HepG2 (cell line): ENCODE measurements at regions of chr5 and their contacts with region 1.

Region 1: GRCh38 chr5:38193015-38193581 is 65.3 kb upstream of the EGFLAM start:
- DNase-seq: peak; percentile 64
- ATAC-seq: peak; percentile 71
- H3K4me3 ChIP-seq: no peak overlapping the region
- H3K27ac ChIP-seq: no peak overlapping the region
- H3K4me1 ChIP-seq: peaks cover 54% of the 10 kb centered on the region
- H3K27me3 ChIP-seq: 0 out of 5 replicates have a peak, but pooled peaks cover 0 to 12% of the 10 kb centered on the region in 2 experiments
- CTCF ChIP-seq: peak; percentile 96
- EP300 ChIP-seq: no peak
- POLR2A ChIP-seq: no peak
- RAD21 ChIP-seq: peak; percentile 96

Region 2: DNA sequence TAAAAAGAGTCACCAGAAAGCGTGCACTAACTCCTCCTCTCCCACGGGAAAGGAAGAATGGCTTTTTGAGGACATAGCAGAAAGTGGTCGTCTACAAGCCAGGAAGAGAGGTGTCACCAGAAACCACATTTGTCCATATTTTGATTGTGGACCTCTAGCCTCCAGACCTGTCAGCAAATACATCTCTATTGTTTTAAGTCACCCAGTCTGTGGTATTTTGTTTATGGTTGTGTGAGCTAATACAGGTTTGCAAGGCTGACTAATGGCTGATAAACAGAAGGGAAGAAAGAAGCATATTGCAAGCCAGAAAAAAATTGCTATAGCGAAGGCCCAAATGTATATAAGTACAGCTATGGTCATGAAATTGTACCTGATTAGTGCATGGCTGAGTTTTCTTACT is 792.6 kb before region 1 on chr5:
- CTCF ChIA-PET with region 1: no interaction called
- POLR2A ChIA-PET with region 1: no interaction called
- in situ Hi-C with region 1: loop called (anchors 10 kb)
- intact Hi-C with region 1: no loop called
- DNase-seq: no peak
- ATAC-seq: no peak
- H3K4me3 ChIP-seq: no peak overlapping the region
- H3K27ac ChIP-seq: no peak overlapping the region
- H3K4me1 ChIP-seq: no peaks in the 10 kb centered on the region
- H3K27me3 ChIP-seq: no peaks in the 10 kb centered on the region
- CTCF ChIP-seq: no peak
- EP300 ChIP-seq: no peak
- POLR2A ChIP-seq: no peak
- RAD21 ChIP-seq: no peak

Region 3: DNA sequence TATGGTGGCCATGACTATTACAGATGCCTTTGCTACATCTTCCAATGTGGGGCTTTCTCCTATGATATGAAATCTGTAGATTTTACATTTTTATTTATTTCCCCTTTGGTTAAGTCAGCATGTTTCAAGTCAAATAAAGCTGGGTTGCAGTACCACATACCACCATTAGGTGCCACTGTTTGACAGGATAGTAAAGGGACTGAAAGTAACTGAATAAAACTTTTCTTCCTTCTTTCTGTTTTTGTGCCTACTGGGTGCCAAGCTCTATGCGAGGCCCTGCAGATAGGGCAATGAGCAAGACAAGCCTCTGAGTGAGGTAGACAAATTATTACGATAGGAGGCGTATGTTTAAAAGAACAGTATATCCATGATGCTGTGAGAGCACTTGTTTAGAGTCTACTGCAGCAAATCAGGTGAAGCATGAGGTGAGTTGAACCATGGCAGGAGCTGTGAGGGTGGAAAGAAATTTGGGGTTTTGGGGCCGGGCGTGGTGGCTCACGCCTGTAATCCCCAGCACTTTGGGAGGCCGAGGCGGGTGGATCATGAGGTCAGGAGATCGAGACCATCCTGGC is 418.1 kb before region 1 on chr5:
- CTCF ChIA-PET with region 1: no interaction called
- POLR2A ChIA-PET with region 1: no interaction called
- in situ Hi-C with region 1: no loop called
- intact Hi-C with region 1: loop called (anchors 5 kb)
- DNase-seq: peak; percentile 13
- ATAC-seq: no peak
- H3K4me3 ChIP-seq: no peak overlapping the region
- H3K27ac ChIP-seq: no peak overlapping the region
- H3K4me1 ChIP-seq: peaks cover 9% of the 10 kb centered on the region; the same call in 1 of the 2 replicates
- H3K27me3 ChIP-seq: no peaks in the 10 kb centered on the region
- CTCF ChIP-seq: peak; percentile 57
- EP300 ChIP-seq: no peak
- POLR2A ChIP-seq: no peak
- RAD21 ChIP-seq: no peak

Region 4: GRCh38 chr5:38023799-38024198 is 169.3 kb before region 1 on chr5:
- CTCF ChIA-PET with region 1: interaction called, 11 read pairs
- POLR2A ChIA-PET with region 1: no interaction called
- in situ Hi-C with region 1: loop called (anchors 5 kb)
- intact Hi-C with region 1: loop called (anchors 1 kb)
- DNase-seq: peak; percentile 12
- ATAC-seq: no peak
- H3K4me3 ChIP-seq: no peak overlapping the region
- H3K27ac ChIP-seq: no peak overlapping the region
- H3K4me1 ChIP-seq: peaks cover 35% of the 10 kb centered on the region
- H3K27me3 ChIP-seq: peaks cover 2 to 20% of the 10 kb centered on the region in 2 experiments; a peak in 3 of 5 replicates
- CTCF ChIP-seq: peak; percentile 14; the same call in 1 of the 2 replicates
- EP300 ChIP-seq: no peak
- POLR2A ChIP-seq: no peak
- RAD21 ChIP-seq: no peak

Region 5: GRCh38 chr5:38104497-38105230 is 88.4 kb before region 1 on chr5:
- CTCF ChIA-PET with region 1: no interaction called
- POLR2A ChIA-PET with region 1: no interaction called
- in situ Hi-C with region 1: no loop called
- intact Hi-C with region 1: loop called (anchors 1 kb)
- DNase-seq: peak; percentile 99
- ATAC-seq: peak; percentile 96
- H3K4me3 ChIP-seq: no peak overlapping the region; a peak in 1 of 6 replicates
- H3K27ac ChIP-seq: peak overlapping the region; percentile 92
- H3K4me1 ChIP-seq: peaks cover 86% of the 10 kb centered on the region
- H3K27me3 ChIP-seq: no peaks in the 10 kb centered on the region
- CTCF ChIP-seq: no peak
- EP300 ChIP-seq: peak; percentile 42 to 93; a peak in 3 of 4 replicates
- POLR2A ChIP-seq: 0 out of 4 replicates have a peak, but pooled peaks of 1 of the 2 experiments have one; percentile 2
- RAD21 ChIP-seq: no peak